Activated T-helper 1 cell treated with anti-CD3 and anti-CD28 coated beads, Interleukin-12 subunit alpha, Interleukin-12 subunit beta, Interleukin-2, Interleukin-4 antibody, amounts not matched to agents 30 ng/mL and 10 ng/mL and 1 ng/mL, durations not matched to agents 14 hours and 24 hours and 36 hours (primary cell): ENCODE measurements at regions of chr10 and their contacts with region 1.

Region 1: GRCh38 chr10:62726142-62726541 is 78.4 kb upstream of the ADO start:
- DNase-seq: peak; percentile 16
- H3K4me3 Mint-ChIP-seq: peak overlapping the region; percentile 25
- H3K27ac Mint-ChIP-seq: peak overlapping the region; percentile 72
- H3K4me1 Mint-ChIP-seq: peaks cover 52% of the 10 kb centered on the region
- H3K27me3 Mint-ChIP-seq: peaks cover 8% of the 10 kb centered on the region

Region 2: DNA sequence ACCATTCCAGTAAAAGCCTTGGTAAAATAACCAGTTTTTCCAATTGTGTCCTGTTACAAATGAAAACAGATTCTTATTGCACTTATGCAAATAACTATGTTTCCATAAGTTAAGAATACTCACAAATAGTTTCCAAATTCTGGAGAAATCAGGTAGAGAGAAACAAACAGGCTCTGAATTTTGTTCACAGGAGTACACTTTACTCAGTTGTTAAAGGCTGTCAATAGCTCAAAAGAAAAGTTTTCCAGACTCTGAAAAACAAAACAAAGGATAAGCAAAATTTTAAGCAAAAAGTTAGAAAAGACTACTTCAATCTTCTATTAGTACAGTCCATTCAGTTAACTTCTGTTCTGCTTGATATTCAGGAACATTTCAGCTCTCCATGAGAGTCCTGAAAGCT is 384.7 kb before region 1 on chr10:
- intact Hi-C with region 1: no loop called
- DNase-seq: no peak
- H3K4me3 Mint-ChIP-seq: no peak overlapping the region
- H3K27ac Mint-ChIP-seq: no peak overlapping the region
- H3K4me1 Mint-ChIP-seq: no peaks in the 10 kb centered on the region
- H3K27me3 Mint-ChIP-seq: no peaks in the 10 kb centered on the region

Region 3: GRCh38 chr10:62352356-62352970 is 373.7 kb before region 1 on chr10:
- intact Hi-C with region 1: no loop called
- DNase-seq: no peak
- H3K4me3 Mint-ChIP-seq: no peak overlapping the region
- H3K27ac Mint-ChIP-seq: peak overlapping the region; percentile 7
- H3K4me1 Mint-ChIP-seq: peaks cover 11% of the 10 kb centered on the region
- H3K27me3 Mint-ChIP-seq: peaks cover 3% of the 10 kb centered on the region

Region 4: DNA sequence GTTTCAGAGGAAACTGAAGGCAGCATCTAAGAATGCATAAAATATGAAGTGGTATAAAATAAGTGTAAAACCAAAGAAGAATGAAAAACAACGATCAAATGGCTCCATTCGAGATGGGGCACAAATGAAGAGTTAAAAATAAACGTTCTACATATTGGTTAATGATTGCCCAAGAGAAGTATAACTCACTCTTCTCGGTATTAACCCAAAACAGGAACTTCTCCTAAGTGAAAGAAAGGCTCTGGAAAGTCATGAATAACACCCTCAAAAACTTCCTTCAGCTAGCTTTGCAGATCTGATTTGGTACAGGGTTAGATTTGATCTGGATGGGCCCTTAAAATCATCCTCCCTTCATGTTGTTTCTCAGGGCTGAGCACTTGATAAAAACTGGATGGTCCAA is 16.0 kb before region 1 on chr10:
- intact Hi-C with region 1: loop called (anchors 1 kb)
- DNase-seq: no peak
- H3K4me3 Mint-ChIP-seq: no peak overlapping the region
- H3K27ac Mint-ChIP-seq: no peak overlapping the region
- H3K4me1 Mint-ChIP-seq: peaks cover 28% of the 10 kb centered on the region
- H3K27me3 Mint-ChIP-seq: peaks cover 5% of the 10 kb centered on the region

Region 5: DNA sequence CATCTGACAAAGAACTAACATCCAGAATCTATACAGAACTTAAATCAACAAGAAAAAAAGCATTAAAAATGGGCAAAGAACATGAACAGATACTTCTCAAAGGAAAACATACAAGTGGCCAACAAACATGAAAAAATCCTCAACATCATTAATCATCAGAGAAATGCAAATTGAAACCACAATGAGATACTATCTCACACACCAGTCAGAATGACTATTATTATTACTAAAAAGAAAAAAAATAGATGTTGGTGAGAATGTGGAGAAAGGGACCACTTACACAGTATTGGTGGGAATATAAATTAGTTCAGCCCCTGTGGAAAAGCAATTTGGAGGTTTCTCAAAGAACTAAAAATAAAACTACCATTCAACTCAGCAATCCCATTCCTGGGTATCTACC is 10.8 kb before region 1 on chr10:
- intact Hi-C with region 1: loop called (anchors 1 kb)
- DNase-seq: no peak
- H3K4me3 Mint-ChIP-seq: no peak overlapping the region
- H3K27ac Mint-ChIP-seq: no peak overlapping the region
- H3K4me1 Mint-ChIP-seq: peaks cover 12% of the 10 kb centered on the region
- H3K27me3 Mint-ChIP-seq: peaks cover 5% of the 10 kb centered on the region

Region 6: GRCh38 chr10:62779487-62780248 is 53.5 kb after region 1 on chr10:
- intact Hi-C with region 1: loop called (anchors 1 kb)
- DNase-seq: peak; percentile 48
- H3K4me3 Mint-ChIP-seq: peak overlapping the region; percentile 27
- H3K27ac Mint-ChIP-seq: peak overlapping the region; percentile 76
- H3K4me1 Mint-ChIP-seq: peaks cover 45% of the 10 kb centered on the region
- H3K27me3 Mint-ChIP-seq: peaks cover 19% of the 10 kb centered on the region

Region 7: GRCh38 chr10:62804356-62805230 is 78.5 kb after region 1 on chr10 and contains the start of gene ADO:
- intact Hi-C with region 1: loop called (anchors 1 kb)
- DNase-seq: peak; percentile 68
- H3K4me3 Mint-ChIP-seq: peak within 1 kb of the TSS; percentile 90
- H3K27ac Mint-ChIP-seq: peak within 1 kb of the TSS; percentile 95
- H3K4me1 Mint-ChIP-seq: peaks cover 41% of the 10 kb centered on the region
- H3K27me3 Mint-ChIP-seq: peaks cover 11% of the 10 kb centered on the region
- total RNA-seq, gene ADO: 52.3 and 55.8 TPM in 2 replicates

Region 8: DNA sequence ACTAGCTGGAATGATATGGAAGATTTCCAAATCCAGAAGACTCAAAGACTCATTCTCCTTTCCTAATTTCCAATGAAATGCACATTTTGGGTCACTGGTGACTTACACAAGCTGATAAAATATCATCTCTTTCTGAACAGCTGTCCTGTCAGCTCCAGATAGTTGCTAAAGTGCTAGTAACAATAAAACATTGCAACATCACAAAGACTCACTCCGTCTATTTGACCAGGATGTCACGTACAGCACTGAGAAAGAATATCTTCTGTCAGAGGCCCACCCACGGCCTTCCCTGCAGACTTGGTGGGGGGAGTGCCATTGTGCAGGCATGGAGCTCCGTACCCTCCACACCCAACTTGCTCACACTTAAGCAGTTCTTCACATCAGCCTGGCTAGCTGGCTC is 168.9 kb after region 1 on chr10:
- intact Hi-C with region 1: no loop called
- DNase-seq: no peak
- H3K4me3 Mint-ChIP-seq: no peak overlapping the region
- H3K27ac Mint-ChIP-seq: no peak overlapping the region
- H3K4me1 Mint-ChIP-seq: no peaks in the 10 kb centered on the region
- H3K27me3 Mint-ChIP-seq: peaks cover 11% of the 10 kb centered on the region